ENCODE measurements at regions of chr14 and their contacts with region 1.

Region 1: GRCh38 chr14:22002860-22003309 is 329.3 kb upstream of the OR4E1 start:
- DNase-seq: peak; percentile 56
- H3K4me3 ChIP-seq: no peak overlapping the region
- H3K27ac ChIP-seq: no peak overlapping the region
- H3K4me1 ChIP-seq: no peaks in the 10 kb centered on the region
- H3K27me3 ChIP-seq: no peaks in the 10 kb centered on the region
- CTCF ChIP-seq: peak; percentile 84

Region 2: GRCh38 chr14:22099942-22100763 is 97.3 kb after region 1 on chr14:
- CTCF ChIA-PET with region 1: no interaction called
- POLR2A ChIA-PET with region 1: no interaction called
- intact Hi-C with region 1: loop called (anchors 5 kb)
- DNase-seq: peak; percentile 89
- H3K4me3 ChIP-seq: no peak overlapping the region
- H3K27ac ChIP-seq: no peak overlapping the region
- H3K4me1 ChIP-seq: peaks cover 4% of the 10 kb centered on the region
- H3K27me3 ChIP-seq: no peaks in the 10 kb centered on the region
- CTCF ChIP-seq: peak; percentile 89

Region 3: DNA sequence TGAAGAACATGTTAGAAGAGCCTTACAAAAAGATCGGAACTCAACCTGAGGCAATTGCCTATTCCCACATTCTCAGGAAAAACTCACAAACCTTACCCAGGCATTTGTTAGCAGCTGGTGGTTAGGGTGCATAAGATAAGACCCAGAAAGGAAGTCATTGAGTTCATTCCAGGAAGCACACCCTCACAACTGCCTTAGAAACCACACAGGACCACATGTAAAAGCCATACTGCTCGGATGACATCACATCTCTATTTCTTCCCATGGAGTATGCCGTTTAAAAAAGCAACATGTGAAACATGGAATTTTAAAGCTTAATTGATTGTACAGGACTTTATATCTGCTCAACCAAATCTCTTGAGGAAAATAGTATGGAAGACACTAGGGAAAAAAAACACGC is 175.0 kb after region 1 on chr14:
- CTCF ChIA-PET with region 1: no interaction called
- POLR2A ChIA-PET with region 1: no interaction called
- intact Hi-C with region 1: no loop called
- DNase-seq: no peak
- H3K4me3 ChIP-seq: no peak overlapping the region
- H3K27ac ChIP-seq: no peak overlapping the region
- H3K4me1 ChIP-seq: no peaks in the 10 kb centered on the region
- H3K27me3 ChIP-seq: no peaks in the 10 kb centered on the region
- CTCF ChIP-seq: no peak